WTC11 (cell line): ENCODE measurements at regions of chr20 and their contacts with region 1.

Region 1: GRCh38 chr20:38730989-38731737 is 6.9 kb downstream of the SLC32A1 start:
- DNase-seq: peak; percentile 93
- ATAC-seq: peak; percentile 36
- H3K4me3 Mint-ChIP-seq: peak overlapping the region; percentile 74
- H3K27ac Mint-ChIP-seq: 0 out of 2 replicates have a peak overlapping the region, but pooled peaks have one; percentile 19
- H3K4me1 Mint-ChIP-seq: peaks cover 51% of the 10 kb centered on the region
- H3K27me3 Mint-ChIP-seq: peaks cover 99% of the 10 kb centered on the region
- CTCF ChIP-seq: peak; percentile 99

Region 2: GRCh38 chr20:38658879-38659596 is 72.1 kb before region 1 on chr20:
- CTCF ChIA-PET with region 1: interaction called, 161 read pairs
- POLR2A ChIA-PET with region 1: no interaction called
- DNase-seq: peak; percentile 76
- ATAC-seq: peak; percentile 99
- H3K4me3 Mint-ChIP-seq: no peak overlapping the region
- H3K27ac Mint-ChIP-seq: no peak overlapping the region
- H3K4me1 Mint-ChIP-seq: peaks cover 17% of the 10 kb centered on the region
- H3K27me3 Mint-ChIP-seq: peaks cover 54% of the 10 kb centered on the region
- CTCF ChIP-seq: peak; percentile 80

Region 3: DNA sequence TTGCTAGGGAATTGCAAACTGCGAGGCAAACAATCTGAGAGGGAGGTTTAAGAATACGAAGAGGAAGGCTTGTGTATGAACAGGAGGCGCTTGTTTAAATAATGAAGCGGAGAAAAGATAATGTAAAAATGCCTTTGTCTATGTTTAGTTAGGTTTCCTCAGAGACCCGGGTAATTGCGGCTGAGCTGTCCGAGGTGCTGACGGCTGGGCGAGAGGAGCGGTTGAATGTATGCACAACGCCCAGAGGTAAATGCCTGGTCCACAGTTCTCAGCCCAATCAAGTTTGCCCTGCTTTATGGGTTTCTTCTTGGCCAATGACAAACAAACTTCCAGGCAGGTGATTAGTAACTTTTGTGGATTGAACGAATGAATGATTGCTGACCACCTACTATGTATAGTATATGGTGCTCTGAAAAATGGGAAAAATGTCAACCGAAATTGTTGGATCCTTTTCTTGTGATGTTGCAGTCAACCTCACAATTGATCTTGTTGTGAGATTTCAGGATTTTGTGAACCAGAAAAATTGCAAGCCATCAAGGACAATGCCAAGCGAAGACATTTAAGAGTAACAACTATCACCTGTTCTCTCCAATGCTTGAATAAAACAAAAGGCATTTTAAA is 45.2 kb before region 1 on chr20:
- CTCF ChIA-PET with region 1: interaction called, 18 read pairs
- POLR2A ChIA-PET with region 1: no interaction called
- DNase-seq: peak; percentile 84
- ATAC-seq: peak; percentile 67
- H3K4me3 Mint-ChIP-seq: no peak overlapping the region
- H3K27ac Mint-ChIP-seq: no peak overlapping the region
- H3K4me1 Mint-ChIP-seq: no peaks in the 10 kb centered on the region
- H3K27me3 Mint-ChIP-seq: peaks cover 87% of the 10 kb centered on the region
- CTCF ChIP-seq: no peak

Region 4: GRCh38 chr20:38706501-38706900 is 24.7 kb before region 1 on chr20:
- CTCF ChIA-PET with region 1: interaction called, 16 read pairs
- POLR2A ChIA-PET with region 1: no interaction called
- DNase-seq: peak; percentile 30
- ATAC-seq: peak; percentile 85
- H3K4me3 Mint-ChIP-seq: no peak overlapping the region
- H3K27ac Mint-ChIP-seq: no peak overlapping the region
- H3K4me1 Mint-ChIP-seq: peaks cover 10% of the 10 kb centered on the region
- H3K27me3 Mint-ChIP-seq: peaks cover 13% of the 10 kb centered on the region
- CTCF ChIP-seq: no peak

Region 5: GRCh38 chr20:38790200-38791053 is 59.3 kb after region 1 on chr20:
- CTCF ChIA-PET with region 1: interaction called, 40 read pairs
- POLR2A ChIA-PET with region 1: no interaction called
- DNase-seq: peak; percentile 67
- ATAC-seq: peak; percentile 92
- H3K4me3 Mint-ChIP-seq: no peak overlapping the region
- H3K27ac Mint-ChIP-seq: no peak overlapping the region
- H3K4me1 Mint-ChIP-seq: no peaks in the 10 kb centered on the region
- H3K27me3 Mint-ChIP-seq: peaks cover 5% of the 10 kb centered on the region; the same call in 1 of the 2 replicates
- CTCF ChIP-seq: peak; percentile 65

Region 6: GRCh38 chr20:39049684-39050554 is 318.8 kb after region 1 on chr20:
- CTCF ChIA-PET with region 1: interaction called, 12 read pairs
- POLR2A ChIA-PET with region 1: no interaction called
- DNase-seq: peak; percentile 88
- ATAC-seq: peak; percentile 81
- H3K4me3 Mint-ChIP-seq: peak overlapping the region; percentile 78
- H3K27ac Mint-ChIP-seq: no peak overlapping the region
- H3K4me1 Mint-ChIP-seq: peaks cover 4% of the 10 kb centered on the region; the same call in 1 of the 2 replicates
- H3K27me3 Mint-ChIP-seq: peaks cover 18% of the 10 kb centered on the region
- CTCF ChIP-seq: peak; percentile 98